ENCODE measurements at regions of chr3 and their contacts with region 1.

Region 1: DNA sequence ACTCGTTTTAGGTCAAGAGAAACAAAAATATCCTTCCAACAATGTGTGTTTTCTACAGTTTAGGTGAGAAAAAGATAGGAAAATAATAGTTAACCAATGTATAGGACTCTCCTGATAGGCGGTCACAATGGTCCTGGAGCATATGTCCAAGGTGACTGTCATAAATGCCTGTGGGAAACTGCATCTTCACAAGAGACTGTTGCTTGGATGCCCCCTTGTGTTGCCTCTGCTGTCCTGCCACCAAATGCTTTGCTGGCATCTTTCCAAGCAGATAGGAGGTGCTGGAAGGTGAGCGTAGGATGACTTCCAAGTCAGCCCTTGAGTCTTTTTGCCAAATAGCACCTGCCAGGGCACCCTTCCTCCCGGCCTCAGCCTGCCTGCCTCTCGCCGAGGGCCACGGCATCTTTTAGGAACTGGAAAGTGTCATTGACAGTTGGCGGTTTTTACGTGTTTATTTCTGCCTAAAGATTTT is 24.1 kb upstream of the SACM1L start:
- DNase-seq: peak; percentile 67
- H3K4me3 Mint-ChIP-seq: peak overlapping the region; percentile 84
- H3K27ac Mint-ChIP-seq: peak overlapping the region; percentile 94
- H3K4me1 Mint-ChIP-seq: peaks cover 49% of the 10 kb centered on the region
- H3K27me3 Mint-ChIP-seq: no peaks in the 10 kb centered on the region

Region 2: DNA sequence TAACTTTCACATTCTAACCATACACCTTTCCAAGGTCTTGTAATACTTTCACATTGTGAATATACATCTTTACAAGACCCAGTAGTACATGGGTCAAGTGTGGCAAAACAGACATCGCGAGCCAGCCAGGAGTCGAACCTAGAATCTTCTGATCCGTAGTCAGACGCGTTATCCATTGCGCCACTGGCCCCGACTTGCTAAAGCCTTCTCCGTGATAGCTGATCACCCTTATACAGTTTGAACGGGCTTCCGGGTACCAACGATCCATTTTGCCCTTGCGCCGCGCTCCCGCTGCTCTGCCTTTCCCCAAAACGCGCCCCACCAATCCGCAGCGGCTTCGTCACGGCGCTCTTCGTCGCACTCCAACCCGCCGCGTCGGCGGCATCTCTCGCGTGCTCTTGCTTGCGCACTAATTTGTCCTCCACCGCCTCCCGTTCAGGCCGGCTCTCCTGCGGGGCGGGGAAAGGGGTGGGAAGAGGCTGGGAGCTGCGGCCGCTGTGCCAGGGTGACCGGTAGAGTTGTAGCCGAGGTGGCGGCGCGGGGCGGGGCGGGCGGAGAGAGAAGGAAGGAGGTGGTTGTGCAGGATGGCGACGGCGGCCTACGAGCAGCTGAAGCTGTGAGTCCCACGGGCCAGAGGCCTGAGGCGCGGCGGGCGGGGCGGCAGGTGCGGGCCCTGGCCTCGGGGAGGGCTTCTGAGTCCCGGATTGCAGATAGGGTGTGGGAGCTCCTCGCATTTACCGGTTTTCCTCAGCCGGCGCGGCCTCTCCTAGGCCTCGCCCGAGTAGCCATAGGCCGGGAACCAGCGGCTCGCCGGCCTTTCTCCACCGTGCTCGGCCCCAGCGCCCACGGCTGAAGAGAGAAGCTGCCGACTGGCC is 24.0 kb after region 1 on chr3 and contains the start of gene SACM1L:
- CTCF ChIA-PET with region 1: interaction called, 15 read pairs
- DNase-seq: peak; percentile 98
- H3K4me3 Mint-ChIP-seq: peak within 1 kb of the TSS; percentile 85
- H3K27ac Mint-ChIP-seq: peak within 1 kb of the TSS; percentile 94
- H3K4me1 Mint-ChIP-seq: peaks cover 53% of the 10 kb centered on the region
- H3K27me3 Mint-ChIP-seq: peaks cover 6% of the 10 kb centered on the region

Region 3: GRCh38 chr3:45719655-45720487 is 54.7 kb after region 1 on chr3:
- CTCF ChIA-PET with region 1: no interaction called
- DNase-seq: no peak
- H3K4me3 Mint-ChIP-seq: no peak overlapping the region
- H3K27ac Mint-ChIP-seq: no peak overlapping the region
- H3K4me1 Mint-ChIP-seq: no peaks in the 10 kb centered on the region
- H3K27me3 Mint-ChIP-seq: no peaks in the 10 kb centered on the region

Region 4: GRCh38 chr3:45741742-45742141 is 76.6 kb after region 1 on chr3:
- CTCF ChIA-PET with region 1: no interaction called
- DNase-seq: peak; percentile 43
- H3K4me3 Mint-ChIP-seq: no peak overlapping the region
- H3K27ac Mint-ChIP-seq: peak overlapping the region; percentile 64
- H3K4me1 Mint-ChIP-seq: peaks cover 24% of the 10 kb centered on the region
- H3K27me3 Mint-ChIP-seq: no peaks in the 10 kb centered on the region

Measured in activated naive CD4-positive, alpha-beta T cell treated with anti-CD3 and anti-CD28 coated beads, Interleukin-2, amount 10 ng/mL, durations not matched to agents 7 days and 5 days (primary cell).